ENCODE measurements at regions of chr1 and their contacts with region 1.

Region 1: GRCh38 chr1:181077576-181078242 is 10.8 kb upstream of the IER5 start:
- DNase-seq: no peak
- ATAC-seq: no peak
- H3K4me3 Mint-ChIP-seq: no peak overlapping the region
- H3K27ac Mint-ChIP-seq: no peak overlapping the region
- H3K4me1 Mint-ChIP-seq: peaks cover 40% of the 10 kb centered on the region
- H3K27me3 Mint-ChIP-seq: peaks cover 28% of the 10 kb centered on the region

Region 2: DNA sequence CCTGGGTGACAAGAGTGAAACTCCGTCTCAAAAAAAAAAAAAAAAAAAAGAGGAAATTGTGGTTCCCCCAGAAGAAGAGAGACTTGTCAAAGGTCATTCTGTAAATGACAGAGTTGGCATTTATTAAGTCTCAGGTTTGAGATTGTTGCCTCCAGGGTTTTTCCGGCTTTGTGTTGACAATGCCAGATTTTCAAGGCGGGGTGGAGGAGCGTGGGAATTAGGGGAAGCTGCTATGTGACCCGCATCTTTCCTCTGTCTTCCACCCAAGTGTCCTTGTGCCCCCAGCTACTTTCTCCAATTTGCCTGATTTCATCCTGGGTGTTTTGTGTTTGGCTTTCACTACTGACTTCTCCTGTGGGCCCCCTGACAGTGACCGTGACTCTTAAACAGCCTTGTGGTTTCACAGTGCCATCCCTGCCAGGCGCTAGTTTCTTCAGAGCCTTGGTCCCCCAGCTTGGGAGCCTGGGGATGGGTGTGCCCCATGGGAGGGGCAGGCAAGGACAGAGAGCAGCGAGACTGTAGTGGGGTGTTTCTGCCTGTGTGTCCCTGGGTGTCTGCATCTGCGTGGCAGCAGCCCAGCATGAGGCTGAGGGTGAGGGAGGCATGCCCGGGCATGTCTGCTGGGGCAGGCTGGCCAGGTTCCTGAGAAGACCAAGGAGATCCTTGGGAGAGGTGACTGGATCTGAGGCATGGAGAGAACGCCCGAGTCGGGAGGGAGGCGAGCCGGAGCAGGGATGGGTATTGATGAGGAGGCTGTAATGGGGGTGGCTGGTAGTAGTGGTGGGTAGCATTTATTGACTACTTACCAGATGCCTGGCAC is 57.0 kb after region 1 on chr1:
- CTCF ChIA-PET with region 1: interaction called, 83 read pairs
- DNase-seq: peak; percentile 63
- ATAC-seq: peak; percentile 62
- H3K4me3 Mint-ChIP-seq: peak overlapping the region; percentile 44
- H3K27ac Mint-ChIP-seq: peak overlapping the region; percentile 90
- H3K4me1 Mint-ChIP-seq: peaks cover 71% of the 10 kb centered on the region
- H3K27me3 Mint-ChIP-seq: no peaks in the 10 kb centered on the region